AG04450 (cell line): ENCODE measurements at regions of chr7 and their contacts with region 1.

Region 1: DNA sequence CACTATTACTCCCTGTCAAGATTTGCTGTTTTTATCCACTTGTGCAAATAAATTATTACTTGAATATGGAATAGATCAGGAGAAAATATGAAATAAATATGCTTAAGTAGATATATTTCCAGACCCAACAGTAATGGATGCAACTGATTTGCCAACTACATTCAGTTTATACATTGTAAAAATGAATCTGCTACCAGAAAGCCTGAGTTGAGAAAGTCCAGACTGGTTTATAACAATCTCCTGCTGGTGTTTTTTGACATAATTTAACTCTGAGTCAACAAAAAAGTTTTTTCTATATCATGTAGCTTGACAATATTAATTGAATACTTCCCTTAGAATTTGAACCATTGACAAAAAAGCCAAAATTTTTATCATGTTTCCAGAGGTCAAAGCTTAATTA is 265.8 kb upstream of the SEMA3D start:
- DNase-seq: no peak
- H3K4me3 ChIP-seq: no peak overlapping the region
- H3K27ac ChIP-seq: no peak overlapping the region
- H3K27me3 ChIP-seq: no peaks in the 10 kb centered on the region
- CTCF ChIP-seq: no peak

Region 2: DNA sequence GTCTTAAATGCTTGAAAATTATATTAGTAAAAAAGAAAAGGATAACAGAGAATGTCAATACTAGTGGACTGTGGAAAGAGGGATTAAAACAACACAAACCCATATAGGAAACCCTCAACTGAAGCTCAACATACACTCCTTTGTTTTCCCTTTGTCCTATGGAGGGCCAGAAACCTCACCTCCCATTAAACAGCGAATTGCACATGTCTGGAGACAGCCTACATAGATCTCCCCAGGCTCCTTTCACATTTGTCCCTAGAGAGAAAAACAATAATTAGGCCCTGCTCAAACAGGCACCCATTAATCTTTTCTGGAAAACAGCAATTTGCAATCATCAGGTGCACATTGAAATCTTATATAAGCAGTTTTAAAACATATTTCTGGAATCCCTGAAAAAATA is 178.2 kb before region 1 on chr7:
- CTCF ChIA-PET with region 1: no interaction called
- POLR2A ChIA-PET with region 1: no interaction called
- DNase-seq: no peak
- H3K4me3 ChIP-seq: no peak overlapping the region
- H3K27ac ChIP-seq: no peak overlapping the region
- H3K27me3 ChIP-seq: no peaks in the 10 kb centered on the region
- CTCF ChIP-seq: no peak

Region 3: DNA sequence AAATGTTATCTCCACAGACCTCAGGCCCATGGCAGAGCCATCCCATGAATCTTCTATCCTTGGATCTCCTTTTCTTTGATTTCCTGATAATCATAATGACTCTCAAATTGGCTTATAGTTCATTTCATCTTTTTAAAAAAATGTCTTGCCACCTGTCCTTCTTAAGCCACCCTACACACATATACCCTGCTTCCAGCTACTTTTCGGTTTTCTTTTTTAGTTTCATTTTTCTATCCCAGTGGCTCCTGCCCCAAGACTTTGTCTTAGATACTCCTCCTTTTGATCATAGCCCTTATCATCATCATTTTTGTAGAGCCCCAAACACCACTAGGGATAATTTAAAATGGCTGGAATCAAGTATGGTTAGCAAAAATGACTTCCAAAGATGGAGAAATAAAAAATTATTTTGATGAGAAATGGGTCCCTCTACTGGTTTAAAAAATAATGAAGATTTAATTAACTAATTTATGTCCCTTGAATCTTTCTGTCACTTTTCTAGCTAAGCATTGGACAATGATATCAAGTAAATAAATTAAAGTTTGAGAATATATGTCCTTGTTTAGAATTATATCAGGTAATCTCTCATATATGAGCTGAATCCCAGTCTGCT is 11.5 kb after region 1 on chr7:
- CTCF ChIA-PET with region 1: interaction called, 11 read pairs
- POLR2A ChIA-PET with region 1: no interaction called
- DNase-seq: no peak
- H3K4me3 ChIP-seq: no peak overlapping the region
- H3K27ac ChIP-seq: no peak overlapping the region
- H3K27me3 ChIP-seq: no peaks in the 10 kb centered on the region
- CTCF ChIP-seq: peak; percentile 33; the same call in 1 of the 2 replicates